ENCODE measurements at regions of chr19 and their contacts with region 1.

Region 1: GRCh38 chr19:15675560-15675959 is 2.7 kb downstream of the CYP4F12 start:
- DNase-seq: no peak
- H3K4me3 ChIP-seq: no peak overlapping the region
- H3K4me3 Mint-ChIP-seq: no peak overlapping the region
- H3K27ac ChIP-seq: no peak overlapping the region
- H3K27ac Mint-ChIP-seq: no peak overlapping the region
- H3K4me1 ChIP-seq: no peaks in the 10 kb centered on the region
- H3K4me1 Mint-ChIP-seq: peaks cover 9% of the 10 kb centered on the region
- H3K27me3 ChIP-seq: no peaks in the 10 kb centered on the region
- H3K27me3 Mint-ChIP-seq: peaks cover 8 to 13% (median 12%) of the 10 kb centered on the region in 3 donors
- CTCF ChIP-seq: no peak

Region 2: DNA sequence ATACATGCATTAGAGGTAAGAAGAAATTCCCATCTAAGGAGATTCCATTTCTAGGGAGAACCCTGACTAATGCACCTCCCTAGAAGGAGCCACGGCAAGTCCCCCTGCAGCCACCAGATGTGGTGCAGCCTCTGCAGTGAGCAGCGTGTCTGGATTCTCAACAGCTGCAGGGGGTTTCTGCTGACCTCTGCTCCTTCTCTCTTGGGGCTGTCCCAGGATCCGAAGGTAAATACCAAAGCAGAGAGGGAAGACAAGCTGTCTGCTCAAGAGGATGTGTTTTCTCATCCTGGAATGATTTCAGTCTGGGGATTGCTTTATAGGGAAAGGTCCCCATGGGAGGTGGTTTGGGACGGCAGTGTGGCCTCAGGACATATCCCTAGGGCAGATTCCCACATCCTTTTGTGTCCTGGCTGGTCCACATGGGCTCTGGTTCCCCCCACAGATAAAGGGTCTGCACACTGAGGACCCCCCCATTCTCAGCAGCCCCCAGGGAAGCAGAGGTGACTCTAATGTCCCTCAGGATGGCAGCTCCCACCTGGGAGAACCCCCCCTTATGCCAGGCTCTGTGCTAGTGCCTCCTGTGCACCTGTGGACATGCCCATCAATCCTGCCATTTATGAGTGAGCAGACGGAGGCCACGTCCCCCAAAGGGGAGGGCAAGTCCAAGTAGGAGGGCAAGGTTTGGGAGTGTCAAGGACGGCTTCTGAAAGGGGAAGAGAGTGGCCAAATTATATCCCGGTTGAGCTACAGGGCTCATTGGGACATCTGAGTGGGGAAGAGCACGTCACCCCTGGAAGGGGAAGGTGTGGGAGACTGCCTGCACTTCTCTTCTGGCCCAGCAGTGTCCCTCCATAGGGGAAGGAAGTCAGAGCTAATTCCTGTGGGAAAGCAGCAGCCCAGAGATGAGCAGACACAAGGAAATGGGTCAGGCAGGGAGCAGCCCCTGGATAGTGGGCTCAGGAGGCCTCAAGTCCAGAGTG is 101.7 kb after region 1 on chr19:
- intact Hi-C with region 1: loop called in 1 of 2 experiments (anchors 2 kb)
- DNase-seq: no peak
- H3K4me3 ChIP-seq: no peak overlapping the region
- H3K4me3 Mint-ChIP-seq: no peak overlapping the region
- H3K27ac ChIP-seq: no peak overlapping the region
- H3K27ac Mint-ChIP-seq: no peak overlapping the region
- H3K4me1 ChIP-seq: no peaks in the 10 kb centered on the region
- H3K4me1 Mint-ChIP-seq: no peaks in the 10 kb centered on the region
- H3K27me3 ChIP-seq: no peaks in the 10 kb centered on the region
- H3K27me3 Mint-ChIP-seq: peaks cover 4 to 9% (median 7%) of the 10 kb centered on the region in 3 donors
- CTCF ChIP-seq: no peak

Region 3: GRCh38 chr19:15869109-15869555 is 193.6 kb after region 1 on chr19:
- intact Hi-C with region 1: no loop called
- DNase-seq: peak; percentile 21 to 43 (median 41)
- H3K4me3 ChIP-seq: no peak overlapping the region
- H3K4me3 Mint-ChIP-seq: no peak overlapping the region
- H3K27ac ChIP-seq: no peak overlapping the region
- H3K27ac Mint-ChIP-seq: peak overlapping the region in 2 of 7 donors; percentile 6 to 75
- H3K4me1 ChIP-seq: peaks cover 29 to 34% of the 10 kb centered on the region in 2 donors
- H3K4me1 Mint-ChIP-seq: peaks cover 57% of the 10 kb centered on the region
- H3K27me3 ChIP-seq: no peaks in the 10 kb centered on the region
- H3K27me3 Mint-ChIP-seq: no peaks in the 10 kb centered on the region
- CTCF ChIP-seq: peak; percentile 62